ENCODE measurements at regions of chr1 and their contacts with region 1.

Region 1: GRCh38 chr1:117758444-117759316 is 152.8 kb downstream of the TENT5C start:
- DNase-seq: peak; percentile 70 to 82 (median 73)
- H3K4me3 ChIP-seq: peak overlapping the region; percentile 34
- H3K27ac ChIP-seq: no peak overlapping the region
- H3K4me1 ChIP-seq: peaks cover 2% of the 10 kb centered on the region
- H3K27me3 ChIP-seq: no peaks in the 10 kb centered on the region
- CTCF ChIP-seq: peak; percentile 51 to 82 (median 74)
- EP300 ChIP-seq: no peak
- POLR2A ChIP-seq: no peak

Region 2: DNA sequence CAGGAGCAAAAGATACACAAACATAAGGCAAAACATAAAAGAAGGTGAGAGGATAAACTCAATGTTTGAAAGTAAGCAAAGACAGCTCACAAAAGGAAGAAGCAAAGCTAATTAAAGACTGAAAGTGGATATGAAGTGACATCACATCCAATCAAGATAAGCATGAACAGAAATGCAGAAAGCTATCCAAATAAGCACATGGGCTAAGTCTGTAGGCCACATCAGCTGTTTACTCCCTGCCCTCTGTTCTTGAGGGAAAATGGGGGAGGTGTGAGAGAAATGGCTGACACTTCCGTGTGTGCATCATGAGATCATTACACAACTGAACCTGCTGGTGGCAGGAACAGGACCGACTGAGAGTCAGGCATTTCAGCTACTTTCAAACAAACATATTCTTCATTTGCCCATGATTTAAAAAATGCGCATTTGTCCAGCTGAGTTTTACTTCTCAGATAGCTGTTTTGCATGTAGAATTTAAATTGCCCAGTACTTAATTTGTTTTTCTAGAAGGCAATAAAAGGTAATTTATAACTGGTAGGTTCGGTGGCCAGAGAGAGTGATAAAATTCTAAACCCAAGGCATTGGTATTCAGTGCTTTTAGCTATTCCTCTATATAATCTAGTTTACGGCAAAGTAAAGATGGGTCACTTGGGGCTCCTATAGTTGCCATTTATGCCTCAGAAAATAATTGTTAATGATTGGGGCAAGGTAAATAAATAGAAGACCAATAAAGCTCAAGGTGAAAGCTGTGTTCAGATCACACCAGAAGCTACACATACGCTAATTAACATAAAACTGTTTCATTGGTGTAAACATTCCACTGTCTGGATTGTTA is 418.6 kb before region 1 on chr1:
- intact Hi-C with region 1: loop called in 1 of 4 experiments (anchors 5 kb)
- DNase-seq: no peak
- H3K4me3 ChIP-seq: no peak overlapping the region
- H3K27ac ChIP-seq: no peak overlapping the region
- H3K4me1 ChIP-seq: no peaks in the 10 kb centered on the region
- H3K27me3 ChIP-seq: no peaks in the 10 kb centered on the region
- CTCF ChIP-seq: no peak
- EP300 ChIP-seq: no peak
- POLR2A ChIP-seq: no peak

Region 3: GRCh38 chr1:117367047-117368018 is 391.3 kb before region 1 on chr1 and contains the start of gene MAN1A2:
- intact Hi-C with region 1: loop called in 1 of 4 experiments (anchors 10 kb)
- DNase-seq: peak; percentile 86 to 89 (median 88)
- H3K4me3 ChIP-seq: peak within 1 kb of the TSS; percentile 65
- H3K27ac ChIP-seq: peak within 1 kb of the TSS; percentile 96 to 99
- H3K4me1 ChIP-seq: peaks cover 6% of the 10 kb centered on the region
- H3K27me3 ChIP-seq: no peaks in the 10 kb centered on the region
- CTCF ChIP-seq: peak in 1 of 3 donors; percentile 30
- EP300 ChIP-seq: no peak
- POLR2A ChIP-seq: peak; percentile 80
- total RNA-seq, gene MAN1A2: 25.9 to 59.9 (median 48.1) TPM

Region 4: GRCh38 chr1:117512743-117513321 is 245.8 kb before region 1 on chr1:
- intact Hi-C with region 1: loop called in 1 of 4 experiments (anchors 5 kb)
- DNase-seq: no peak
- H3K4me3 ChIP-seq: no peak overlapping the region
- H3K27ac ChIP-seq: no peak overlapping the region
- H3K4me1 ChIP-seq: no peaks in the 10 kb centered on the region
- H3K27me3 ChIP-seq: no peaks in the 10 kb centered on the region
- CTCF ChIP-seq: peak in 2 of 3 donors; percentile 31 to 33
- EP300 ChIP-seq: no peak
- POLR2A ChIP-seq: no peak

Region 5: GRCh38 chr1:117534995-117535467 is 223.6 kb before region 1 on chr1:
- intact Hi-C with region 1: loop called (anchors 2 to 10 kb)
- DNase-seq: peak; percentile 18 to 41 (median 26)
- H3K4me3 ChIP-seq: no peak overlapping the region
- H3K27ac ChIP-seq: no peak overlapping the region
- H3K4me1 ChIP-seq: no peaks in the 10 kb centered on the region
- H3K27me3 ChIP-seq: no peaks in the 10 kb centered on the region
- CTCF ChIP-seq: peak in 2 of 3 donors; percentile 22 to 52
- EP300 ChIP-seq: no peak
- POLR2A ChIP-seq: no peak

Region 6: GRCh38 chr1:117594261-117594990 is 164.3 kb before region 1 on chr1:
- intact Hi-C with region 1: no loop called
- DNase-seq: no peak
- H3K4me3 ChIP-seq: no peak overlapping the region
- H3K27ac ChIP-seq: no peak overlapping the region
- H3K4me1 ChIP-seq: no peaks in the 10 kb centered on the region
- H3K27me3 ChIP-seq: no peaks in the 10 kb centered on the region
- CTCF ChIP-seq: no peak
- EP300 ChIP-seq: no peak
- POLR2A ChIP-seq: no peak

Region 7: GRCh38 chr1:117605774-117606648 is 152.7 kb before region 1 on chr1 and contains the start of gene TENT5C:
- intact Hi-C with region 1: loop called in 2 of 4 experiments (anchors 5 kb)
- DNase-seq: peak; percentile 98 to 99 (median 98)
- H3K4me3 ChIP-seq: peak within 1 kb of the TSS; percentile 94
- H3K27ac ChIP-seq: peak within 1 kb of the TSS; percentile 72 to 89
- H3K4me1 ChIP-seq: no peaks in the 10 kb centered on the region
- H3K27me3 ChIP-seq: no peaks in the 10 kb centered on the region
- CTCF ChIP-seq: no peak
- EP300 ChIP-seq: peak; percentile 50
- POLR2A ChIP-seq: peak; percentile 67
- total RNA-seq, gene TENT5C: 6.2 to 24.7 (median 11.4) TPM

Region 8: DNA sequence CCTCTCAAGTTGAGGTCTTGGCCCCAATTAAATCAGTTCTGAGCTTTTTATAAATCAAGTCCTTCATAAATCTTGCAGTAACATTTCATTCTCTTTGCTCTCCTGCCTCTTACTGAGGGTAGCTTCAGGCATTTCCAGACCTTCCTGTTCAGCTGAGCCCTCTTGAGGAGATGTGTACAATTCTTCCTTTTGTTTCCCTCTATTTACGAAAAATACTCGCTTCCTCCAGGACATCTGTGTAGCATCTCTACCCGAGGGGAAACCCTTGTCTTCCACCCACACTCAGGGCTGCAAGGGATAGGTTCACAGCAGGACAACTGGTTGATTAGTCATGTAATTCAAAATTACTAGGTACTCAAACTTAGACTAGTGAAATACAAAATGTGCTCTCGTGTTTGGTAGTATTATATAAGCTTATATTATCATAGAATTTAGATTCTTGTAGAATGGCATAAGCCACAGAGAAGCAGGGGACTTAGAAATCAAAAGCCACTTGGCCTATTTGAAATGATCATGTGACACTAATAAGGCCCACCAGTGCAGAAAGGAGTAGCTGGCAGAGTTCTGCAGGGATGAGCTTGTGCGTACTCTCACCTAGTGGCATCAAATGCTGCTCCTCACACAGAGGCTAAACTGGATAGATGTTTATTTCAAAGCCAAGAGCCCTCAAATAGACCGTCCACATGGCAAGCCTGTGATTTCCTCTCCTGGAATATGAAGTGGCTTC is 44.0 kb after region 1 on chr1:
- intact Hi-C with region 1: no loop called
- DNase-seq: no peak
- H3K4me3 ChIP-seq: no peak overlapping the region
- H3K27ac ChIP-seq: no peak overlapping the region
- H3K4me1 ChIP-seq: no peaks in the 10 kb centered on the region
- H3K27me3 ChIP-seq: no peaks in the 10 kb centered on the region
- CTCF ChIP-seq: no peak
- EP300 ChIP-seq: no peak
- POLR2A ChIP-seq: no peak

Region 9: DNA sequence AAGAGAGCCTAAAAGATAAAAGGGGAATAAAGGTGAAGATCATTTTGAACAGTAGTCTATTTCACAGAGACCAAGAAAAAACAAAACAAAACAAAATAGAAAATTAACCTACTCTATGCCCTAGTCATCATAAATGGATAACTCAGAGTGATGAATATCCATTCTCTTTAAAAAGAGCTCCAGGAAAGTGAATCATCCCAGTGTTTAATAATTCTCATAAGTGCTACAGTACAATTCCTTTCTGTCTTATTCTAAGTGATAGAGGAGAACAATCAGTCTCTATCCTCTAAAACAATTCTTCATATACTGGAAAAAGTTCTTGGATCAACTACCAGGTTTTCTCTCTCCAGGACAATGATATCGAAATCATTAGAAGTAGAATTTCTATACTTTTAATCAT is 124.9 kb after region 1 on chr1:
- intact Hi-C with region 1: no loop called
- DNase-seq: no peak
- H3K4me3 ChIP-seq: no peak overlapping the region
- H3K27ac ChIP-seq: no peak overlapping the region
- H3K4me1 ChIP-seq: no peaks in the 10 kb centered on the region
- H3K27me3 ChIP-seq: no peaks in the 10 kb centered on the region
- CTCF ChIP-seq: no peak
- EP300 ChIP-seq: no peak
- POLR2A ChIP-seq: no peak

Region 10: DNA sequence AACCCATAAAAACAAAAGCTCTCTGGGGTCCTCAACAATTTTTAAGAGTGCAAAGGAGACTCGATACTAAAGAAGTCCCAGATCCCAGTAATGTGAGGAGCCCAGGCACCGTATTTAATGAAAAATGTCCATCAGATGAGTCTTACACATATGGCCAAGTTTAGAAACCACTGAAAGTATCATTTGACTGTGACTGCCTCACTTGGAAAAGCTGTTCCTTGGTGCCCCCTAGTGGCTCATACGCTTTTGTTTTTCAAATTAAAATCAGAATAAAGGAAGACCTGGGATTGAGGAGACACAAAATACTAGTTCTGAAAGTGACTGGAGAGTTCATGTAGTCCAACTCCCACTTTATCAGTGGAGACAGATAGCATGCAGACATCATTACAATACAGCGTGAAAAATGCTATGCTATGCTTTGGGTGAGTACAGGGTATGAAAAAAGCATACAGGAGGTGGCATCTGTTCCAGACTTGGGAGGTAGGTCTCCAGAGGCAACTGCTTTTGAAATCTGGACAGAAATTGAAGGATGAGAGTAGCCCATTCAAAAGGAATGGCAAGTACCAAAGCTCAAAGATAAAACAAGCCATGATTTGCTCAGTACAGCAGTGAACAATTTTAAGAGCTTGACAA is 136.9 kb after region 1 on chr1:
- intact Hi-C with region 1: loop called in 1 of 4 experiments (anchors 10 kb)
- DNase-seq: peak; percentile 35 to 72 (median 48)
- H3K4me3 ChIP-seq: no peak overlapping the region
- H3K27ac ChIP-seq: no peak overlapping the region
- H3K4me1 ChIP-seq: no peaks in the 10 kb centered on the region
- H3K27me3 ChIP-seq: no peaks in the 10 kb centered on the region
- CTCF ChIP-seq: peak; percentile 42 to 66 (median 55)
- EP300 ChIP-seq: no peak
- POLR2A ChIP-seq: no peak

Measured in ovary (tissue), 10 donors.